ENCODE measurements at regions of chr17 and their contacts with region 1.

Region 1: DNA sequence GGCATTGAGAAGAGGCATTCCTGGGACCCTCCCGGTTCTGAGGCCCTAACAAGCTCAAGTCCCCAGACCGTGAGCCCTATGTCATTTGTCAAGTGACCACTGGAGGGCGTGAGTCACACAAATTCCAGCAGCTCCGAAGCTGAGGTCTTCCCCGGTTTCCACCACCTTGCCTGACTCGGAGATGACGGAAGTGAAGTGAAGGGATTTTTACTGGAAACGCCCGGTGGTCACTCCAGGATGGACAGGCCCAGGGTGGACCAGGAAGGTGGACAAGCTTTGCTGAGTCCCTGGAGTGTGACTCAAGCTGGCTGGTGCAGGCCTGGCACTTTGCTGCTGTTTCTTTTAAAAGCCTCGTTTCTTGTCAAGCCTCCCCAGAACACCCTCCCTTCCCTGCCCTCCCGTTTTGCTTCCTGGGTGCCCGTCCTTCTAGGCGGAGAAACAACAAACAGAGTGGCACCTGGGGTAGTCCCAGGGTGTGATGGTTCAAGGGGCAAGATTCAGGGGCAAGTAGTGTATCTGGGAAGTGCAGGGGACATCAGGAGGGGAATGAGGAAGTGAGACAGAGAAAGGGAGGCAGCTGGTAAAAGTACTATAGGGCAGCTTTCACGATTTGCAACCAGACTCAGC is 5.3 kb upstream of the NOS2 start:
- DNase-seq: peak; percentile 72
- H3K4me3 ChIP-seq: peak overlapping the region; percentile 36
- H3K27ac ChIP-seq: peak overlapping the region; percentile 11
- H3K27me3 ChIP-seq: peaks cover 8% of the 10 kb centered on the region
- CTCF ChIP-seq: peak; percentile 84

Region 2: DNA sequence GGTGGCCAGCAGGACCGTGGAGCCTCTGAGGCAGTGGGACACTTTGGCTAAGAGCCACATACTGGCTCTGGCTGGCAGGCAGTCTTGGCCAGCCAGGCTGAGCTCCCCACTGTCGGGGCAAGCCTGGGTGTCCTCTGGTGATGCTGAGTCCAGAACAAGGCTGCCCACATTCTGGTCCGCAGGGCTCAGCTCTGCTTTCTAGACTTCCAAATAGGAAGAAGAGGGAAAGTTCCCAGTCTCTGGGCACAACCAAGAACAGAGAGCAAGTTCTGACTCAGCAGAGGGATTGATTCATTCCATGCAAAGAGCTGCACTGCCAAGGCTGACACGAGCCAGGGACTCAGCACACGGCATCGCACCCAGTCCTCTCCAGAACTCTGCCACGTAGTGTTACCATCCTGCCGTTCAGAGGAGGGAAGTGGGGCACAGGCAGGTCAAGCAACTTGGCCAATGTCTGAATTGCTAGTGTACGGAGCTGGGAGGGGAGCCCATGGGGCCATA is 64.2 kb before region 1 on chr17:
- CTCF ChIA-PET with region 1: no interaction called
- POLR2A ChIA-PET with region 1: no interaction called
- DNase-seq: no peak
- H3K4me3 ChIP-seq: no peak overlapping the region
- H3K27ac ChIP-seq: no peak overlapping the region
- H3K27me3 ChIP-seq: peaks cover 2% of the 10 kb centered on the region
- CTCF ChIP-seq: no peak

Region 3: GRCh38 chr17:27778193-27778592 is 27.4 kb before region 1 on chr17:
- CTCF ChIA-PET with region 1: interaction called, 5 read pairs
- POLR2A ChIA-PET with region 1: interaction called, 11 read pairs
- DNase-seq: no peak
- H3K4me3 ChIP-seq: no peak overlapping the region
- H3K27ac ChIP-seq: no peak overlapping the region
- H3K27me3 ChIP-seq: peaks cover 2% of the 10 kb centered on the region
- CTCF ChIP-seq: no peak

Region 4: GRCh38 chr17:27793168-27793905 is 12.3 kb before region 1 on chr17:
- CTCF ChIA-PET with region 1: interaction called, 30 read pairs
- POLR2A ChIA-PET with region 1: no interaction called
- DNase-seq: no peak
- H3K4me3 ChIP-seq: 0 out of 2 replicates have a peak overlapping the region, but pooled peaks have one; percentile 14
- H3K27ac ChIP-seq: no peak overlapping the region
- H3K27me3 ChIP-seq: peaks cover 21% of the 10 kb centered on the region
- CTCF ChIP-seq: no peak

Region 5: DNA sequence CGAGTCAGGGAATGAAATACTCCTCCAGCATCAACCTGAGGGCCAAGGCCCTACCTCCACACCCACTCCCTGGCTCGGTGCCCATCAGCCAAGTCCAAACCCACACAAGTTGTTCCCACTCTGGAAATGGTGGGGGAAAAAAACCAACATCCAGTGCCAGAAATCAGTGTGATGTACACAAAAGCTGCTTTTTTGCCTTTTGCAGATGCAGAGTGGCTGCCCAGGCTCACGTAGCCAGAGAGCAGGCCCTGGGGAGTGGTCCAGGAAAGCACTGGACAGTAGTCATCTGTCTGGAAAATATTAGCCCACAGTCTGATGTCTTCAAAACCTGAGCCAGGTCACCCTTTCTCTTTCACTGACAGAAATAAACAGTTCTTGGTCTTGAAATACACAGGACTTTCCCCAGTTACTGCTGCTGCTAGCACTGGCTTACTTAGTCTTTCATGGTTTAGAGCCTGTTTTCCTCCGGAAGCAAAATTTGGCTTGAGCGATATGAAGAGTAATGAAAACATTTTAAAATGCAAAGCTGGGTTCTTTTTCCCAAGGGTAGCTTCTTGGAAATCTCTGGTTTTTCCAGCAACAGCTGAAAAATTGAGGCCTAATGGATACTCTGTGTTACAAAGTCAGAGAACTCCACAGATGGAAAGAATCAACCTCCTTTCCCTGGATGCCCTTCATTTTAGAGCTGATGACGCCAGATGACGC is 12.9 kb after region 1 on chr17:
- CTCF ChIA-PET with region 1: interaction called, 14 read pairs
- POLR2A ChIA-PET with region 1: no interaction called
- DNase-seq: no peak
- H3K4me3 ChIP-seq: no peak overlapping the region
- H3K27ac ChIP-seq: no peak overlapping the region
- H3K27me3 ChIP-seq: no peaks in the 10 kb centered on the region
- CTCF ChIP-seq: no peak

Region 6: DNA sequence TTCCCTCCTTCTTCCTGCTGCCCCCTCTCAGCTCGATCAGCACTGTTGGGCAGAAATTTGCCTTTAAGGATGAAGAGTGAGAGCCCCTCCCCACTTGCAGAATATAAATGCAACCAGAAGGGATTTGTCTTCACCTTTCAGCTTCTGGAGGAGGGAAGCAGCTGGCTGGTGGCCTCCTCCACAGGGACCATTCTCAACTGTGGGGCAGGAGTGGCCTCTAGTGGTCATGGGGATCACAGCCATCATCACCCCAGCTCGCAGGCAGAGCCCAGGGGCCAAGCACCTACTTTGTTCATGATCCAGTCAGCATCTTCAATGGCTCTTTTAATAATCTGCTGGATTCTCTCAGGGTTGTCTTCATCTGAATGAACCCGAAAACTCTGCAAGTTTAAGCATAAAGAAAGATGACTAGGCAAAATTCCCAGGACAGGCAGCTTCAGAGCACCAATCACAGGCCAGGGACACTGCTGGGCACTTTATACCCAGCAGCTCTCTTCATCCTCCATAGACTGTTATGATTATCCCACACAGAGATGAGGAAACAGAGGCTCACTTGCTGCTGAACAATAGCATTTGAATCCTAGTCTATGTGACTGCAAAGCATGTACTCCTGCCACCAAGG is 74.5 kb after region 1 on chr17:
- CTCF ChIA-PET with region 1: interaction called, 291 read pairs
- POLR2A ChIA-PET with region 1: no interaction called
- DNase-seq: peak; percentile 29
- H3K4me3 ChIP-seq: no peak overlapping the region
- H3K27ac ChIP-seq: no peak overlapping the region
- H3K27me3 ChIP-seq: peaks cover 8% of the 10 kb centered on the region
- CTCF ChIP-seq: peak; percentile 89

Region 7: DNA sequence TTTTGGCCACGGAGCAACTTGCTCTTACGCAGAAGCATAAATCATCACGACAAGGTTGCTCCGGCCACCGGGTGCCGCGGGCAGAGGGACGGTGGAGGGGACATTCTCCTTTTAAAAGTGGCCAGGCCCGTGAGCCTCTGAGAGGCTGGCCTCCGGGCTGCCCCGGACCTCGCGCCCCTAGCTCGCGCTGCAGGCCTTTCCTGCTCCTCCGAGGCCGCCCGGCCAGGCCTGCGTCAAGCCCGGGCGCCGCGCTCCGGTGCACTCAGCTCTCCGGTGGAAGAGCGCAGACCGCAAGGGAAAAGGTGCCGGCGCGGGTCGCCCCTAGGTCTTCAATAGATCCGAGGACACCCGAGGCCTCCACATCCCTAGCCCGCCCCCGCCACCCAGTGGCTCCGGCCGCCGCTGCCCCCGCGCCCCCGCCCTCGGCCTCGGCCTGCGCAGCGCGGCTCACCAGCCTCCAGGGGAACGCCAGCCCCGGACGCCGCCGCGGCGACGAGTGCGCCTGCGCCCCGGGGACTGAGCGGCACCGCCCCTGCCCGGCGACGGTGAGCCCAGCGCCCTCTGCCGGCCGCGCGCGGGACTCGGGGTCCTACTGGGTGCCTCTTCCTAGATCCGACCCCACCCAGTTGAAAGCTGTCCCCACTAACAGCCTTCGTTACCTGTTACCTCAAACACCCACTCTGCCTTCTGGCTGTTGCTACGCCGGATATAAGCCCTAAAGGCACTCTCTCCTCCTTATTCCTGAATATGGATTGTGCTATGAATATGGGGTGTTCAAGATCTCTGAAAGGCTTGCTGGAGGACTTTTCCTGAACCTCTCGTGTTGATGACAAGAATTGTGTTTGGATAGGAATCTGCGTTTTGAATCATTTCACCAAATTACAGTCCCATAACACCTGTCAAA is 87.5 kb after region 1 on chr17 and contains the start of gene LYRM9:
- CTCF ChIA-PET with region 1: interaction called, 41 read pairs
- POLR2A ChIA-PET with region 1: no interaction called
- DNase-seq: peak; percentile 37
- H3K4me3 ChIP-seq: peak within 1 kb of the TSS; percentile 65
- H3K27ac ChIP-seq: peak within 1 kb of the TSS; percentile 21
- H3K27me3 ChIP-seq: peaks cover 4% of the 10 kb centered on the region
- CTCF ChIP-seq: peak; percentile 78
- polyA plus RNA-seq, gene LYRM9: 4.9 and 6.1 TPM in 2 replicates

Region 8: GRCh38 chr17:28252436-28252835 is 446.8 kb after region 1 on chr17:
- CTCF ChIA-PET with region 1: interaction called, 28 read pairs
- POLR2A ChIA-PET with region 1: no interaction called
- DNase-seq: no peak
- H3K4me3 ChIP-seq: no peak overlapping the region
- H3K27ac ChIP-seq: no peak overlapping the region
- H3K27me3 ChIP-seq: peaks cover 25% of the 10 kb centered on the region
- CTCF ChIP-seq: no peak